ENCODE measurements at regions of chr12 and their contacts with region 1.

Region 1: DNA sequence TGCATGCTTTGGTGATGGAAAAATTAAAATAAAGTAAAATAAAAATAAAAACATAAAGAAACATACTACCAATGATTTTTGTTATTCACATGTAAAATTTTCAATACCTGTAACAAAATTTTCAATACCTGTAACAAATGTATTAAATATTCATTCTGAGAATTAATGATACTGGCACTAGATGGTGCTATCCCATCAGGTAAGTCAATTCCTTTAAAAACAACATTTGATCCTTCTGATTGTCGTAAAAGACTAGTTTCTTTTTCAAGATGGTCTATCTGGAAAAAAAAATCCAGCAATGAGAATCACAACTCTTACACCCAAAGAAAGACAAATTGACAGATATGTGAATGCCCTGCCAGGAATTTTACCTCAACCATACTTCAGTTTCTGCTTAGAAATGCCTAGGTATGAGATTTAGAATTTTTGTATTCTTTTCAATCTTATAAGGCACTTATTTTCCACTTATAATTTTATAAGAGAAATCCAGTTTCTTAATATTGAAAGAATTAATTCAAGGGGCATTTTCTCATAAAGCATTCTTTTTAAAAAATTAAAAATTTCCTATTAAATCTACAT is 30.7 kb downstream of the CEP290 start:
- DNase-seq: peak; percentile 72
- H3K4me3 ChIP-seq: peak overlapping the region; percentile 73
- H3K27ac ChIP-seq: no peak overlapping the region
- H3K4me1 ChIP-seq: peaks cover 16% of the 10 kb centered on the region
- H3K27me3 ChIP-seq: no peaks in the 10 kb centered on the region

Region 2: GRCh38 chr12:89524541-89525285 is 1413.5 kb after region 1 on chr12 and contains the start of gene GALNT4:
- in situ Hi-C with region 1: loop called (anchors 25 kb)
- DNase-seq: peak; percentile 93
- H3K4me3 ChIP-seq: peak within 1 kb of the TSS; percentile 94
- H3K27ac ChIP-seq: peak within 1 kb of the TSS; percentile 58
- H3K4me1 ChIP-seq: peaks cover 33% of the 10 kb centered on the region
- H3K27me3 ChIP-seq: no peaks in the 10 kb centered on the region
- total RNA-seq, gene GALNT4: 6.4 and 10.6 TPM in 2 replicates

Measured in GM23248 (cell line).